GM13977 (cell line): ENCODE measurements at regions of chr12 and their contacts with region 1.

Region 1: DNA sequence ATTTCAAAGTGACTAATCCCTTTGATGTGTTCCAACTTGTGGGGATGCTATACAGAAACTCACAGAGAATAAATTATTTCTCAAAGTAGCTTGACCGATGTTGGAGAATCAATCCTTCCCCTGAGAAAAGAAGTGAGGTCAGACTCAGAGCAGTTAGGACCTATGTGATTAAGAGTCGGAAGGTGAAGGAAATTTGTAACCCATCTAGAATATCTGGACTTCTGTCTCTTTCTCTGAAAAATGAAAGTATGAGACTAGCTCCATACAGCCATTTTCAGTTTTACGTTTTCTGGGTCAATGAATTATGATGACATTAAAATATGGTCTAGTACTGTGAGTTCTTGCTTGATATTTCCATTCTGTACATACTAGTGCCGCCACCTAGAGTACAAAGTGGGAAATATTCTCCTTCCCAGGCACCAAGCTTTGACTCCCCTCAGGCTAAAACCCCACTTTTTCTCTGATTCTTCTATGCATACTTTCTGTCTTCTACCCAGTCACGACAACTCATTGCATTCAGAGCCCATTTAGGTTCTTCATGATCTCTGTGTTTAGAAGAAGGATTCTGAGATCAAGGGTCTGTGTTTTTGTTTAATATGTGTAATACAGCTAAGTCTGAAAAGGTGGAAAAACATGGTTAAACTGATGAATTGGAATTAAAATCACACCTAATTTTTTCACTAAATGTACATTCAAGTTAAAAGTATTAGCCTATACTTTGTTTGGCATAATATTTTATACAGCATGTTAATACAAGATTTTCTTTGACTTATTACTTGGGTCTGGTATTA is 6.9 kb upstream of the NTS start:
- DNase-seq: peak; percentile 46
- CTCF ChIP-seq: peak; percentile 71

Region 2: GRCh38 chr12:85476756-85477155 is 390.4 kb before region 1 on chr12:
- in situ Hi-C with region 1: loop called (anchors 10 kb)
- DNase-seq: no peak
- CTCF ChIP-seq: no peak

Region 3: GRCh38 chr12:85575120-85576096 is 291.8 kb before region 1 on chr12:
- in situ Hi-C with region 1: loop called (anchors 25 kb)
- DNase-seq: peak; percentile 42
- CTCF ChIP-seq: peak; percentile 67